Activated B cell treated with CpG ODN at 0.5 μM for 24 hours (primary cell): ENCODE measurements at regions of chr3 and their contacts with region 1.

Region 1: GRCh38 chr3:194691481-194692283 is 6.0 kb downstream of the FAM43A start:
- DNase-seq: peak; percentile 30
- ATAC-seq: peak; percentile 62
- H3K4me3 Mint-ChIP-seq: peak overlapping the region; percentile 73
- H3K27ac Mint-ChIP-seq: peak overlapping the region; percentile 97
- H3K4me1 Mint-ChIP-seq: peaks cover 84% of the 10 kb centered on the region
- H3K27me3 Mint-ChIP-seq: no peaks in the 10 kb centered on the region
- CTCF ChIP-seq: no peak

Region 2: DNA sequence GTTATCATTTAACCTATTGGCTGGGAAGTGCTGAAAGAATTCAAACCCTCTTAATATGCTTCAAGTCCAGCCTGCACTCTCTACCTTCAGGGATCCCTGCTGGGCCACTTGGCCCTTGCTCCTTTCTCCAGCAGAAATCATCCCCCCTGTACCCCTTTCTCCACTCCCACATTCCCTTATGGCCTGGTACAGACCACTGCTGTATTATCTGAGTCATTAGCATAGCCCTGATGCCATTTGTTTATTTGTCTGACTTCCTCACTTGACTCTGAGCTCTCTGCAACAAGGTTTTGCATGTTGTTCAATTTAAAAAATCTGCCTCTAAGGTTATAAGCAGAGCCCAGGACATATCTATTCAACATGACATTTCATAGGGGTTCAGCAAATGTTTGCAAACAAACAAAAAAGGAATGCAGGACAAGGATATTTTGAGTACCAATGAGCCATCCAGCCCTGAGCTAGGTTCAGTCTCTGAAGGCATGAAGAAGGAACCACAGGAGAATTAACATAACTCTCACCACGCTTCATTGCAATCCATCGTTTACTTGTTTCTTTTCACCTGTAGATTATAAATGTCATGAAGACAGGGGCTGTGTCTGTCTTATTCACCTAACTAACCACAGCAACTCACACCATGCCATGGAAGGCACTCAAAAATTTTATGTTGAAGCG is 582.4 kb before region 1 on chr3:
- CTCF ChIA-PET with region 1: no interaction called
- POLR2A ChIA-PET with region 1: no interaction called
- intact Hi-C with region 1: no loop called
- DNase-seq: no peak
- ATAC-seq: peak; percentile 25
- H3K4me3 Mint-ChIP-seq: peak overlapping the region; percentile 8
- H3K27ac Mint-ChIP-seq: peak overlapping the region; percentile 51
- H3K4me1 Mint-ChIP-seq: peaks cover 58% of the 10 kb centered on the region
- H3K27me3 Mint-ChIP-seq: no peaks in the 10 kb centered on the region
- CTCF ChIP-seq: no peak

Region 3: GRCh38 chr3:194404365-194405140 is 287.1 kb before region 1 on chr3:
- CTCF ChIA-PET with region 1: no interaction called
- POLR2A ChIA-PET with region 1: no interaction called
- intact Hi-C with region 1: no loop called
- DNase-seq: no peak
- ATAC-seq: no peak
- H3K4me3 Mint-ChIP-seq: no peak overlapping the region
- H3K27ac Mint-ChIP-seq: no peak overlapping the region
- H3K4me1 Mint-ChIP-seq: peaks cover 2% of the 10 kb centered on the region
- H3K27me3 Mint-ChIP-seq: peaks cover 5% of the 10 kb centered on the region
- CTCF ChIP-seq: peak; percentile 58

Region 4: DNA sequence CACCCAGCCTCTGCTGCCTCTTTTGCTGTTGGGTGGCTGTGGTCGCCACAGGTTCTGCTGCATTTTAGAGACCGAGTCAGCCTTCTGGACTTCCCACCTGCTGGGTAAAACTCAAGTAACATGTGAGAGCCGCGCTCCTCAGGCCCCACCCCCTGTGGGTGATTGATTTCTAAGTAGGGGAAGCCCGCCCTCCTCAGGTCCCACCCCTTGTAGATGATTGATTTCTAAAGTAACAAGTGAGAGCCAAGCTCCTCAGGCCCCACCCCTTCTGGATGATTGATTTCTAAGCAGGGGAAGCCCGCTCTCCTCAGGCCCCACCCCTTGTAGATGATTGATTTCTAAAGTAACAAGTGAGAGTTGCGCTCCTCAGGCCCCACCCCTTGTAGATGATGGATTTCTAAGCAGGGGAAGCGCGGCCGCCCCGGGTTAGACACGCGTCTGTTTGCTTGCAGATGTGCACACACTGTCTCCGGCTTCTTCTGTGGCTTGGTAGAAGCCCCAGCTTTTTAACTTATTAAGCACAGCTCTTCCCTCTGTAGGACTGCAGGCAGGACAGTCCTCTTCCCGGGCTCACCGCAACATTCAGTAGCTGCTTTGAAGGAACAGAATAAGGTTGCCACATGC is 77.5 kb after region 1 on chr3:
- CTCF ChIA-PET with region 1: interaction called, 6 read pairs
- POLR2A ChIA-PET with region 1: interaction called, 61 read pairs
- intact Hi-C with region 1: loop called (anchors 1 kb)
- DNase-seq: peak; percentile 69
- ATAC-seq: peak; percentile 98
- H3K4me3 Mint-ChIP-seq: peak overlapping the region; percentile 86
- H3K27ac Mint-ChIP-seq: peak overlapping the region; percentile 94
- H3K4me1 Mint-ChIP-seq: peaks cover 34% of the 10 kb centered on the region
- H3K27me3 Mint-ChIP-seq: peaks cover 5% of the 10 kb centered on the region
- CTCF ChIP-seq: no peak